ENCODE measurements at regions of chr1 and their contacts with region 1.

Region 1: DNA sequence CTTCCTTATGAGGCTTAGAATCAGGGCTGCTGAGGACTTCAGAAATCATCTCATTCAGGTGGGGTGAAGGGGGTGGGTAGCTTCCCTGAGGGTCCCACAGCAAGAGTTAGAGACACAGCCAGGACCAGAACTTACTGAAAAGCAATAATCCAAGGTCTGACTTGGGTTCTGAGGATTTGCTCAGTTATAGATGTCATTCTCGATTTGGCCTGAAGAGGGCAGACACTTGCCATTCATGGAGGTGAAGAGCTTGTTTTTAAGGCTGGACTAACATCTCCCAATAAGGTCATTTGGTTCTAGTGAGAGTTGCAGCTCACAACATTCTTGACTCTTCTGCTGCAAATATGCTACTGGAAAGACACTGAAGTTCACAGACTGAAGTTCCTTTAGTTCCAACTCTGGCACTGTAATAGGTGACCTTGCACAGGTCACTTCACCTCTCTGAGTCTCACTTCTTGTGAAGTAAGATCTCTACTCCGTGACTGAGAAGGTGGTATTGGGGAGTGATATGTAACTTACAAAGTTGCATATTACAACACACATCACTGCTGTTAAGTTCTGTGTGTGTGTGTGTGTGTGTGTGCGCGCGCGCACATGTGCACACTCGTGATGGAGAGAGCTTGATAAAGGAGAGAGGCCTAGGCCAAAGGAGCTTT is 69.8 kb upstream of the DIRAS3 start:
- DNase-seq: peak; percentile 55
- CTCF ChIP-seq: peak; percentile 76

Region 2: GRCh38 chr1:68016381-68016780 is 103.9 kb before region 1 on chr1:
- CTCF ChIA-PET with region 1: no interaction called
- POLR2A ChIA-PET with region 1: no interaction called
- DNase-seq: no peak
- CTCF ChIP-seq: no peak

Region 3: GRCh38 chr1:68103884-68104554 is 16.2 kb before region 1 on chr1:
- CTCF ChIA-PET with region 1: interaction called, 40 read pairs
- POLR2A ChIA-PET with region 1: no interaction called
- DNase-seq: no peak
- CTCF ChIP-seq: no peak

Region 4: GRCh38 chr1:68321084-68321685 is 200.9 kb after region 1 on chr1:
- CTCF ChIA-PET with region 1: interaction called, 24 read pairs
- POLR2A ChIA-PET with region 1: no interaction called
- DNase-seq: peak; percentile 22
- CTCF ChIP-seq: peak; percentile 2

Region 5: DNA sequence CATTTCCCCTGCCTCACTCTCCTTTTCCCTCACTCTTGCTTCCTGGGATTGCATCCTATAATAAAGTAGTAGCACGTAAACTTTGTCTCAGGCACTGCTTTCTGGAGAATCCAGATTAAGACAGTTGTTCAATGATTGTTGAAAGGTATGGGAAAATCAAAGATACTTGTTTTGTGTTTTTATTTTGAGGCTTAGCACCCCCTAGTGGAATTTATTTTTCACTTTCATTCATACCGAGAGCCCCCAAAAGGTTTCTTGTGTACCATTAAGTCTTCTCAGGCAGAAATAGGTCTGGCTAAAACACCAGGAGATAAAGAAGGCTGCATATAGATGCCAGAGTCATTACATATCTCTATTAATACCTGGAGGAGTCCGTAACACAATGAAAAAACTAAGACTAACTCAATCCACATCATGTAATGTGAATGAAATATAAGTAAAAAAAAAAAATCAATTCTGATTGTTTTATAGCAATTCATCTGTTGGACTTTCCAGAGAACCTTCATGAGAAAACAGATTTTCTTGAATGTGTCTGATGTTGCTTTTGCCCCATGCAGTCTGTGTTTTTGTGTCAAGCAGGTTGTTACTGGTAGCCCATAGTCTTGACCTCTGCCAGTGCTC is 226.0 kb after region 1 on chr1:
- CTCF ChIA-PET with region 1: interaction called, 112 read pairs
- POLR2A ChIA-PET with region 1: no interaction called
- DNase-seq: no peak
- CTCF ChIP-seq: peak; percentile 44

Region 6: GRCh38 chr1:68644521-68644920 is 524.3 kb after region 1 on chr1:
- CTCF ChIA-PET with region 1: no interaction called
- POLR2A ChIA-PET with region 1: no interaction called
- DNase-seq: no peak
- CTCF ChIP-seq: no peak

Region 7: DNA sequence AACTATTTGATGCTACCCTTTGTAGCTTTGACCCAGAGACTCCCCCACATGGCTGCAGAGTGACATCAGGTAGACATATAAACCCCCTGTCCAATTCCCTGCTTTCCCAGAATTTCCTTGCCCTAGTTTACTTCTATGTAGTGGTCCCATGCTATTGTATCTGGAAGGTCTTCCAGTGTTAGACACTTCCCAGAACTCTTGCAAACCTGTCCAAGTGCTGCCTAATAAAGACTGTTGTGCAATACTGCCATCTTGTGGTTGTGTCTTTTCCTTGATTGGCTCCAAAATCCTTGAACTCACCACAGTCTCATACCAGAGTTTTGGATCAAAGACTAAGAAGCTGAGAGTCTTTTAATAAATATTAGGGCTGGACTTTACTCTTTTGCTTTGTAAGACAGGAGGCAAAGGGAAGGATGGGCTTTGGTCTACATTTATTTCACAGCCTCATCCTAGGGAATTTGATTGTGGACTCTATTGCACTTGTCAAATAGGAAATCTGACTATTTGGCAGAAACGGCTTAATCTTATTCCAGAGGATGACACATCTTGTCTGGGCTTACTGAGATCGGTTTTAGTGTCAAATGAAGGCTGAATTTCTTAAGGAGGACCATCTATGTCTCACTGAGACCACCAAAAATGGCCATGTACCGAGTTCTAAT is 1617.4 kb after region 1 on chr1:
- CTCF ChIA-PET with region 1: interaction called, 43 read pairs
- POLR2A ChIA-PET with region 1: no interaction called
- DNase-seq: peak; percentile 10
- CTCF ChIP-seq: peak; percentile 50